ENCODE measurements at regions of chr17 and their contacts with region 1.

Region 1: DNA sequence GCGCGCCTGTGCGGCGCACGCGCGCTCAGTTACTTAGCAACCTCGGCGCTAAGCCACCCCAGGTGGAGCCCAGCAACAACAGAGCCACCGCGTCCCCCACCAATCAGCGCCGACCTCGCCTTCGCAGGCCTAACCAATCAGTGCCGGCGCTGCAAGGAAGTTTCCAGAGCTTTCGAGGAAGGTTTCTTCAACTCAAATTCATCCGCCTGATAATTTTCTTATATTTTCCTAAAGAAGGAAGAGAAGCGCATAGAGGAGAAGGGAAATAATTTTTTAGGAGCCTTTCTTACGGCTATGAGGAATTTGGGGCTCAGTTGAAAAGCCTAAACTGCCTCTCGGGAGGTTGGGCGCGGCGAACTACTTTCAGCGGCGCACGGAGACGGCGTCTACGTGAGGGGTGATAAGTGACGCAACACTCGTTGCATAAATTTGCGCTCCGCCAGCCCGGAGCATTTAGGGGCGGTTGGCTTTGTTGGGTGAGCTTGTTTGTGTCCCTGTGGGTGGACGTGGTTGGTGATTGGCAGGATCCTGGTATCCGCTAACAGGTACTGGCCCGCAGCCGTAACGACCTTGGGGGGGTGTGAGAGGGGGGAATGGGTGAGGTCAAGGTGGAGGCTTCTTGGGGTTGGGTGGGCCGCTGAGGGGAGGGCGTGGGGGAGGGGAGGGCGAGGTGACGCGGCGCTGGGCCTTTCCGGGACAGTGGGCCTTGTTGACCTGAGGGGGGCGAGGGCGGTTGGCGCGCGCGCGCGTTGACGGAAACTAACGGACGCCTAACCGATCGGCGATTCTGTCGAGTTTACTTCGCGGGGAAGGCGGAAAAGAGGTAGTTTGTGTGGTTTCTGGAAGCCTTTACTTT is at the start of gene UBB:
- DNase-seq: peak; percentile 95
- H3K4me3 ChIP-seq: peak within 1 kb of the TSS; percentile 78 to 99
- H3K27ac ChIP-seq: peak within 1 kb of the TSS; percentile 94 to 97
- H3K4me1 ChIP-seq: peaks cover 4 to 15% of the 10 kb centered on the region in 2 experiments; a peak in 2 of 4 replicates
- H3K27me3 ChIP-seq: no peaks in the 10 kb centered on the region
- CTCF ChIP-seq: peak; percentile 12; the same call in 1 of the 2 replicates
- EP300 ChIP-seq: peak; percentile 33 to 85; a peak in 3 of 4 replicates
- RAD21 ChIP-seq: no peak
- polyA plus RNA-seq, gene UBB: 2,465 and 2,693 TPM in 2 replicates

Region 2: DNA sequence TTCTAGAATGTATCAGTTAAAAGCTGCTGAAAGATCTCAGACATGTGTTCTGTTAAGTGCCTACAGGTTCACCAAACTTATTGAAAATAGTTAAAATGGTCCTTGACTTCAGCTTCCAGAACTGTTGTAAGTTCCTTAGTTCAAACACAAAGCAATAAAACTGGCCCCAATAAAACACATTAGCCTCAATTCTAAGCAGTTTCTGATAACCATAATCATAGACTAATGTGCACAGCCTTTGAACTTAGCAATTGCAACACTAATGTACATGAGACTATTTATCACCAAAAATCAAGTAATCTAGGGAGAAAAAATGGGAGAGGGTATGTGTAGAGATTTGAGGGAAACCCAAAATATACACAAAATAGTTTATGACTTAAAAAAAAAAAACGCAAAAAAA is 148.5 kb before region 1 on chr17:
- CTCF ChIA-PET with region 1: no interaction called
- POLR2A ChIA-PET with region 1: no interaction called
- DNase-seq: no peak
- H3K4me3 ChIP-seq: no peak overlapping the region
- H3K27ac ChIP-seq: no peak overlapping the region
- H3K4me1 ChIP-seq: no peaks in the 10 kb centered on the region
- H3K27me3 ChIP-seq: no peaks in the 10 kb centered on the region
- CTCF ChIP-seq: no peak
- EP300 ChIP-seq: no peak
- RAD21 ChIP-seq: no peak

Region 3: DNA sequence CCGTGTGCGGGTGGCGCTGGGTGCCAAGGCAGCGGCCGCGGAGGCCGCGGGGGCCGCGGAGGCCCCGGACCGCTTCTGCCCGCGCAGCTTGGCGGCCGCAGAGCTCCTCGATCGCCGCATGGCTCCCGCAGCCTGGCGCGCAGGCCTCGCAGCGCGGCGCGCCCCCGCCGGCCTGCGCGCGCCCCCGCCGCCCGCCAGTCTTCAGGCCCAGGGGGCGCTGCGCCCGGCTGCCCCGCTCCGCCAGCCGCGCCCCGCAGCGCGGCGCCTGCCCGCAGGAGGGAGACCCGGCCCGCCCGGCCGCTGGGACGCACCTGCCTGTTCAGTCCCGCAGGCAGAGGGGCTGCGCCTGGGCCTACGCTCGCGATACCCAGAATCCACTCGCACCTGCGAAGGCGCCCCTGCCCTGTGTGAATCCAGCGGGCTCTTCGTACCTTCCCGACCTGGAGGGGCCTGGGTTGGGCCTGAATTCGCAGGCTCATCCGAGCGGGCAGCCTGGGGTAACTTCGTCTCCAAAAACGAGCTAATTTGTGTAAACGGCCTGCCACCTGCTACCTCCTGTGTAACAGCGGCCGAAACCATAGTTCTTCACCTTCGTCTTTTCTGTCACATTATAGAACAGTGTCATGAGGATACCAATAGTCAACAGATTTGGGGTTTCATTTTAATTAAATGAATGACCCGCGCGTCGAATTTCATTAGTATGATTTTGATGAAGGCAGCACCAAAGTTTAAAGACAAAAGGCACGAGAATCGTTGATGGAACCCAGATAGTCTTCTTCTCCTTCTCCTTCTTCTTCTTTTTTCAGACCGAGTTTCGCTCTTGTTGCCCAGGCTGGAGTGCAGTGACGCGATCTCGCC is 27.3 kb before region 1 on chr17 and contains the start of gene CENPV:
- CTCF ChIA-PET with region 1: interaction called, 4 read pairs
- POLR2A ChIA-PET with region 1: interaction called, 22 read pairs
- DNase-seq: peak; percentile 95
- H3K4me3 ChIP-seq: peak within 1 kb of the TSS; percentile 65 to 84
- H3K27ac ChIP-seq: peak within 1 kb of the TSS; percentile 79 to 80
- H3K4me1 ChIP-seq: no peaks in the 10 kb centered on the region; a peak in 2 of 4 replicates
- H3K27me3 ChIP-seq: no peaks in the 10 kb centered on the region
- CTCF ChIP-seq: peak; percentile 19
- EP300 ChIP-seq: no peak
- RAD21 ChIP-seq: no peak
- polyA plus RNA-seq, gene CENPV: 92.3 and 97.7 TPM in 2 replicates

Region 4: DNA sequence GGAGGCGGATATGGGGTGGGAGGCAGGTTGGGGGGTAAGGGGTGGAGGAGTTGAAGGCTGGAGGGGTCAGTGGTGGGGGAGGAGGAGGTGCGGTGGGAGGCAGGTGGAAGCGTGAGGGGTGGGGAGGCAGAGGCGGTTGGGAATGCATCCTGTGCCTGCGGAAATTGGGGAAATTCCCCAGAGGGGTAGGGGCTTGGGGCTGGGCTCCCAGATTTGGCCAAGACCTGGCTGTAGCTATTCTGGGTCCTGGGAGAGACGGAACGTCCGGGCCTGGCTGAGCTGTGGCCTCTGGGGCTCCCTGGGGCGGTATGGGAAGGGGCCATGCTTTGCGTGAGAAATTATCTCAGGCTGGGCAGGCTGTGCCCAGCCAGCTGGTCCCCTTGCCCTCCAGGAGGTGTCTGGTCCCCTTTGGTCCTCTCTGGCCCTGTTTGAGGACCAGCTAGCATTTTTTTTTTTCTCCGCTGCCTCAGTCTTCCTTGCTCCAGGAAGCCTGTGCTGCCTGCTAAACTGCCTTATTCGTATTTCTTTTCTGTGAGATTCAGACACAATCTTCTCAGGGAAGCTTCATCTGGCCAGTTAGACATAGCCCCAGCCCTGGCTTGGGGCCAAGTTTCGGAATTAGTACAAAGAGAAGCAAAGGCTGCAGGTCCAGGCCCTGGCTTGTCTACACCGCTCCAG is 27.2 kb after region 1 on chr17:
- CTCF ChIA-PET with region 1: no interaction called
- POLR2A ChIA-PET with region 1: interaction called, 20 read pairs
- DNase-seq: peak; percentile 76
- H3K4me3 ChIP-seq: peak overlapping the region in 1 of 2 experiments; percentile 20; a peak in 1 of 4 replicates
- H3K27ac ChIP-seq: peak overlapping the region; percentile 54 to 82
- H3K4me1 ChIP-seq: peaks cover 0 to 11% of the 10 kb centered on the region in 2 experiments; a peak in 1 of 4 replicates
- H3K27me3 ChIP-seq: no peaks in the 10 kb centered on the region
- CTCF ChIP-seq: no peak
- EP300 ChIP-seq: no peak
- RAD21 ChIP-seq: no peak